Activated T-helper 2 cell treated with anti-CD3 and anti-CD28 coated beads, Interferon-gamma antibody, Interleukin-2, Interleukin-4, amounts not matched to agents 10 μg/mL and 5 μg/mL and 100 μg/mL, durations not matched to agents 14 hours and 24 hours and 36 hours (primary cell): ENCODE measurements at regions of chr17 and their contacts with region 1.

Region 1: DNA sequence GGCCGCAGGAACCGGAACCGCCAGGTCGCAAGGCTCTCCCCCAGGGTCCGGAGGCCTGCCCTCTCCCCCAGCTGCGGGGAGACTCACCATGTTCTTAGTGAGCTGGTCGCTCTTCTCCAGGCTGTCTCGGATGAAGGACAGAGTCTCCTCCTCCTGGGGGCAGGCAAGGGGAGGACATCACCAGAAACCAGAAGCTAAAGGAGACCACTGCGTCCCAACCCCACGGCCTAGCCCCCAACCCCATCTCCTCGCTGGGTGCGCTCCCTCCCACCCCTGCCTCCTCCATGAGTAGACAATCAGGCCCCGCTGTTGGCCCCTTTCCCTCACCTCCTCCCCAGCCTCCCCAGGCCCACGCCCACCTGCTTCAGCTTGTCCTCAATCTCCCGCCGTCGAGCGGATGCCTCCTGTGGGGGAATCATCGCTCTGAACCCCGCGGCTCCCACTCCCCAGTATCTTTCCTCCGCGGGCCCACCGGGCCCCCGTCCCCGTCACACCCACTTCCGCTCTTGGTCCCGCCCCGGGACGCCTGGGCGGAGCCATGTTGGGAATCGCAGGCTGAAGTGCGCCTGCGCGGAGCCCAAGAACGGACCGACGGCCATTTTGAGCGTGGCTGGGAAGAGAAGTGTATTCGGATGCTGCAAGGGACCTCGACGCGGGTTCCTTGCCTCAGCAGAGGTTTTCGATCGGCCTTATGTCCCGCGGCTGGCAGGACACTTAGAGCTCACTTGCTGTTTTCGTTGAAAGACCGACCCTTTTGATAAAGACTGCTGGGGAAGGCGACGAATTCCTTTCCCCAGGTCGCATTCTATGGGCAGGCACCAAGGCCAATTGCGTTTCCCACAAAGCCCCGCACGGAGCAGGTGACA is at the start of gene EXOC7:
- DNase-seq: peak; percentile 91
- H3K4me3 Mint-ChIP-seq: peak within 1 kb of the TSS; percentile 96
- H3K27ac Mint-ChIP-seq: peak within 1 kb of the TSS; percentile 93
- H3K4me1 Mint-ChIP-seq: peaks cover 10% of the 10 kb centered on the region
- H3K27me3 Mint-ChIP-seq: no peaks in the 10 kb centered on the region
- total RNA-seq, gene EXOC7: 103 and 110 TPM in 2 replicates

Region 2: DNA sequence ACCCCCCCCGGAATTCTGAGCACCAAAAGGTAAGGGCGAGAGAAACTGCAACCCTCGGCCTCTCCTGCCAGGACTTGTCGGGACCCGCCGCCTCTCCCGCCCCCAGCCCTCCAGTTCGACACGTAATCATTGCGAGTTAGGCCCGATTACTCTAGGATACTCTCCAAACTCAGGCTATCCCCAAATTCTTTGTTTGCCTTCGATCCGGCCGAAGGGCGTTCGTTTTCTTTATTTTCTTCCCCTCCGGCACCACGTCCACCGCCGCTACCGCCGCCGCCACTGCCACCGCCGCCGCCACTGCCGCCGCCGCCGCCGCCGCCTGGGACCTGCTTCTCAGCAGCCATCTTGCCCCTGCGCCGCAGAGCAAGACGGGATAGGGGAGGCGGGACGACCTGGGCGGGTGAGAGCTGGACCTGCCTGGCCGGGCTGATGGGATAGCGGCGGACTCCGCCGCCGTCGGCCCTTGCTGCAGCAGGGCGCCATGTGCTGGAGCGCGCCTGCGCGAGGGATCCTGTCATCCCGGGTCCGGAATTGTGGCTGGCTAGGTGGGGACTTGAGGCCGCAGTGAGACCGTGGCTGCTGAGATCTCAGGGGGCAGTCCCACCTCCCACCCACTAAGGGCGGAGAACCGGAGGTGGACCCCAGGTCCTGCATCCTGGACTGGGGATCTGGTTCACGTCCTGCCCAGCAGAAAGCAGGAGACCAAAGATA is 31.2 kb before region 1 on chr17 and contains the start of gene SRP68:
- intact Hi-C with region 1: loop called (anchors 2 kb)
- DNase-seq: peak; percentile 82
- H3K4me3 Mint-ChIP-seq: peak within 1 kb of the TSS; percentile 99
- H3K27ac Mint-ChIP-seq: peak within 1 kb of the TSS; percentile 100
- H3K4me1 Mint-ChIP-seq: peaks cover 26% of the 10 kb centered on the region
- H3K27me3 Mint-ChIP-seq: peaks cover 34% of the 10 kb centered on the region
- total RNA-seq, gene SRP68: 188 and 194 TPM in 2 replicates